H1 (cell line): ENCODE measurements at regions of chrX and their contacts with region 1.

Region 1: GRCh38 chrX:54182864-54183608 is at the start of gene FAM120C:
- DNase-seq: peak in 1 of 2 experiments; percentile 60
- H3K4me3 ChIP-seq: peak within 1 kb of the TSS; percentile 54 to 86 (median 62)
- H3K27ac ChIP-seq: peak within 1 kb of the TSS; percentile 92; the same call in 1 of the 2 replicates
- H3K4me1 ChIP-seq: peaks cover 0 to 4% (median under 1%) of the 10 kb centered on the region in 4 experiments; a peak in 2 of 7 replicates
- H3K27me3 ChIP-seq: no peaks in the 10 kb centered on the region
- CTCF ChIP-seq: no peak
- EP300 ChIP-seq: no peak
- POLR2A ChIP-seq: peak; percentile 49 to 57
- RAD21 ChIP-seq: no peak
- total RNA-seq, gene FAM120C: 8.1 and 8.6 TPM in 2 replicates

Region 2: DNA sequence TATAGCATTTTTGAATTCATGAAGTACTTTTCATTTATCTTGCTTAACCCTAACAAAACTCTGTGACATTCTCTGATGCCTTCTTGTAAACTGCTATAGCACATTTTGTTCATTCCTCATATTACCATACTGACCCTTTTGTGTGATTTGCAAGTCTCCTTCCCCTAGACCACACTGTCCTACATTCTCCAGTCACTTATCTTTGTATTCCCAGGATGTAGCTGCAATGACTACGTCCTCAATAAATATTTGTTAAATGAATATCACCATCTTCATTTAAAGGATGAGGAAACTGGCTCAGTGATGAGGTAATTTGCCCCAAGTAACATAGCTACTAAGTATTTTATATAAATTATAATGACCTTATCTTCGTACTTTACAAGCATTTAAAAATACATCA is 508.5 kb before region 1 on chrX:
- CTCF ChIA-PET with region 1: no interaction called
- POLR2A ChIA-PET with region 1: no interaction called
- DNase-seq: no peak
- H3K4me3 ChIP-seq: no peak overlapping the region
- H3K27ac ChIP-seq: no peak overlapping the region
- H3K4me1 ChIP-seq: no peaks in the 10 kb centered on the region
- H3K27me3 ChIP-seq: no peaks in the 10 kb centered on the region
- CTCF ChIP-seq: no peak
- EP300 ChIP-seq: no peak
- POLR2A ChIP-seq: no peak
- RAD21 ChIP-seq: no peak

Region 3: DNA sequence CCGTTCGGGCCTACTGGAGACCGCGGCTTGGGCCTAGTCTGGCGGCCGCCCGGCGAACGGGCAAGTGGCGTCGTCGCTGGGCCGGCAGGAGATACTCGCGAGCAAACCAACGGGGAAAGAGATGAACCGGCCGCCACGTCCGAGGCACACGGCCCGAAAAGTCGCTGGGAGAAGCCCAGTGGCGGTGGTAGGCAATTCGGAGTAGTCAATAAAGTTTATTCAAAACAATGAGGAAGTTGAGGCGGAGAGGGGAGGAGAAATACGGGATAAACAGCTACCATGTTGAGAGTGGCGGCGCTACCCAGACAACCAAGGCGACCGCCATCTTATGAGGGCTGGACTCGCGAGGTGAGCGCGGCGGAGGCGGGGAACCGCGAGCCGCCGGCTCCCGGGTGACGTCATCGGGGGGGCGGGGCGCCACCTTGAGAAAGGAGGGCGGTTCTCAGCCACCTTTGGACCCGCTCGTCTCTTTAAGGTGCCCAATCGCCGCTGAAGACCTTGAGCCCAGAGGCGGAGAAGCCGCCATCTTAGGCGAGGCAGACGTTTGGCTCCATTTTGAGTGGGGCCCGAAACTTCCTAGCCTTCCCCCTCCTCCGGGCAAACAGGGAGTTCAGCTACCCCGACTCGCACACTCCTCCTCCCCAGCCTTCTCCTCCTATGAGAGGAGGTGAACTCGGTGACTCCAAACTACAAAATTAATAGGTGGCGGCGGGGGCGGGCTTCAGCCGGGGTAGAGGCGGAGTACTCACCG is 138.7 kb before region 1 on chrX and contains the start of gene PHF8:
- CTCF ChIA-PET with region 1: no interaction called
- POLR2A ChIA-PET with region 1: interaction called, 18 read pairs
- DNase-seq: peak; percentile 86 to 92
- H3K4me3 ChIP-seq: peak within 1 kb of the TSS; percentile 72 to 90 (median 78)
- H3K27ac ChIP-seq: peak within 1 kb of the TSS; percentile 91
- H3K4me1 ChIP-seq: peaks cover 1 to 7% (median 4%) of the 10 kb centered on the region in 4 experiments; a peak in 3 of 7 replicates
- H3K27me3 ChIP-seq: no peaks in the 10 kb centered on the region
- CTCF ChIP-seq: no peak
- EP300 ChIP-seq: no peak
- POLR2A ChIP-seq: peak; percentile 49 to 59
- RAD21 ChIP-seq: no peak
- total RNA-seq, gene PHF8: 27.6 and 29.8 TPM in 2 replicates

Region 4: DNA sequence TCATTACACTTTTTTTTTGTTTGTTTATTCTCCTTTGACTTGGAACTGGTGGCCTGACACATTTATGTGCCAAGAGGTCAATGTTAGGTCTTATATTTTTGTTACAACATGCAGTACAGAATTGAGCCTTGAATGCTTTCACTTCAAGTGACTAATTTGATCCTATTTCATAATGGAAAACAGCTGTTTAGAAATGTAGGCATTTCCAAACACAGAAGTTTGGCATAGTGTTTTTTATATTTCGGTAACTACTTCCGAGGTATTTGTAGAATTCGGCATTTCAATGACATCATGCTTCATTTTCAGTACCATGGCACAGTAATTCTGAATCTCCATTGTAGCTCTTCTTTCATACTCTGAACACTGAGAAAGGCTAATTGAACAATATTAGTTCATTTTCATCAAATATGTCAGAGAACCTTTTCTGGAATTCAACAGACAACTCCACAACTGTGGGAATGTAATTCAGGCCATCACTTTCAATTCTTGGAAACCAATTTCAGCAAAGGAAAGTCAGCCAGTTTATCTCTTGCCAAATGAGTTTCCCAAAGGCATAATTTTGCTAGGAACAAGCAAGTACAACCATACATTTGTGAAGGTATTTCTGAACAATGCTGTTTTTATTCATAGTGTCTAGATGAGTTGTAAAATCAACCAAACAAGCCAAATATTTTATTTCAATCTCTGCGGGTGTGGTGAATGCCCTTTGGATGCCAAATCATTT is 11.3 kb before region 1 on chrX:
- CTCF ChIA-PET with region 1: no interaction called
- POLR2A ChIA-PET with region 1: interaction called, 22 read pairs
- DNase-seq: no peak
- H3K4me3 ChIP-seq: no peak overlapping the region
- H3K27ac ChIP-seq: no peak overlapping the region
- H3K4me1 ChIP-seq: no peaks in the 10 kb centered on the region
- H3K27me3 ChIP-seq: no peaks in the 10 kb centered on the region
- CTCF ChIP-seq: no peak
- EP300 ChIP-seq: no peak
- POLR2A ChIP-seq: no peak
- RAD21 ChIP-seq: no peak

Region 5: GRCh38 chrX:54271664-54272063 is 88.6 kb after region 1 on chrX:
- CTCF ChIA-PET with region 1: no interaction called
- POLR2A ChIA-PET with region 1: no interaction called
- DNase-seq: no peak
- H3K4me3 ChIP-seq: no peak overlapping the region
- H3K27ac ChIP-seq: no peak overlapping the region
- H3K4me1 ChIP-seq: no peaks in the 10 kb centered on the region
- H3K27me3 ChIP-seq: no peaks in the 10 kb centered on the region
- CTCF ChIP-seq: no peak
- EP300 ChIP-seq: no peak
- POLR2A ChIP-seq: no peak
- RAD21 ChIP-seq: no peak